Psoas muscle (tissue), 8 donors: ENCODE measurements at regions of chr10 and their contacts with region 1.

Region 1: GRCh38 chr10:93680412-93681047 is 21.9 kb downstream of the FRA10AC1 start:
- DNase-seq: no peak
- ATAC-seq: no peak
- H3K4me3 ChIP-seq: no peak overlapping the region
- H3K27ac ChIP-seq: no peak overlapping the region
- H3K4me1 ChIP-seq: no peaks in the 10 kb centered on the region
- H3K27me3 ChIP-seq: no peaks in the 10 kb centered on the region
- CTCF ChIP-seq: peak; percentile 26

Region 2: DNA sequence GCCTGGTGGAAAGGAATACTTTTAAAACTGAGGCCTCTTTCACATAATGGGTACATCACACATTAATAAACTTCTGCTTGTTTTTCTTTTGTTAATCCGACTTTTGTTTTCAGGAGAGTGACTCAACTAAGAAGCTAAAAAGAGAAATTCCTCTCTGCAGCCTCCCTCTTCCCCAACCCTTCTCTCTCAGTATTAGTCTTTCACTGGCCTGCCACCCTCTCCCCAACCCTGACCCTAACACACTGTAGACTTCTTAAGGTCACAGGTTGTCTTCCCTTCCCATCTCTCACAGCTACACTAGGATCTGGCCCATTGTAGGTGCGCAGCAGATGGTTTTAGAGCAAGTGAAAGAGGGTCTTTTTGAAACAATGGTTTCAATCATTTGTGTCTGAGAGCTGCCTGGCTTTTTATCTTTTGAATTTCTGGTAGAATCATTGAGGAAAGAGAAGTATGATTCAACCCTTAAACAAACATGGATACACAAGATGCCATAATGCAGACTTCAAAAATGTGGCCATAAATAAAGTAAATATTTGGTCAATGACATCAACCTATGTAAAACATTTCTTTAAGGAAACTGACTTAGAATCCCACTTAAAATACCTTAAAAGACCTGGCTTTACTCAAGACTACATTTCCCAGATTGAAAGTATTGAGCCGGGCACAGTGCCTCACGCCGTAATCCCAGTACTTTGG is 132.0 kb before region 1 on chr10:
- intact Hi-C with region 1: loop called in 1 of 2 experiments (anchors 5 kb)
- DNase-seq: no peak
- ATAC-seq: no peak
- H3K4me3 ChIP-seq: no peak overlapping the region
- H3K27ac ChIP-seq: no peak overlapping the region
- H3K4me1 ChIP-seq: no peaks in the 10 kb centered on the region
- H3K27me3 ChIP-seq: peaks cover 0 to 2% (median 0%) of the 10 kb centered on the region in 3 donors
- CTCF ChIP-seq: no peak

Region 3: GRCh38 chr10:94344522-94345122 is 664.1 kb after region 1 on chr10:
- intact Hi-C with region 1: loop called in 1 of 2 experiments (anchors 10 kb)
- DNase-seq: no peak
- ATAC-seq: no peak
- H3K4me3 ChIP-seq: no peak overlapping the region
- H3K27ac ChIP-seq: no peak overlapping the region
- H3K4me1 ChIP-seq: no peaks in the 10 kb centered on the region
- H3K27me3 ChIP-seq: no peaks in the 10 kb centered on the region
- CTCF ChIP-seq: no peak